ENCODE measurements at regions of chr5 and their contacts with region 1.

Region 1: GRCh38 chr5:153147891-153148623 is 342.4 kb upstream of the GRIA1 start:
- DNase-seq: peak; percentile 31 to 43
- H3K4me3 ChIP-seq: no peak overlapping the region
- H3K27ac ChIP-seq: no peak overlapping the region
- H3K4me1 ChIP-seq: no peaks in the 10 kb centered on the region
- H3K27me3 ChIP-seq: no peaks in the 10 kb centered on the region
- CTCF ChIP-seq: peak in 5 of 6 experiments; percentile 18 to 72 (median 62)
- POLR2A ChIP-seq: no peak

Region 2: DNA sequence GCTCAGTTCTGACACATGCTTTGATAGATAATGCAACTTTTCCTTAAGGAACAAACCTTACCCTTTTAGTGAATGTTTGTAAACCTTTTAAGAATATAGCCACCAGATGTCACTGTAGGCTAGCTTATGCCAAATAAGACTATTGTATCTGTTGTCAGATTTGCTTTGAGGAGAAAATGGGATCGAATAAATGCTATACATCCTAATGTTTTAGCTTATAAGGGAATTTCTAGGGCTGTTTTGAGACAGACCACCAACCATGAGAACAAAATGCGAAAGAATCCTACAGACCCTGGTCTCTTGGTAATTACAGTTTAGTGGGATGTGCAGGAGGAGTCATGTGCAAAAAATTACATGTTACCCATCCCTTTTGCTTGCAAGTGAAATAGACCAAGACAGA is 615.3 kb before region 1 on chr5:
- intact Hi-C with region 1: loop called (anchors 10 kb)
- DNase-seq: no peak
- H3K4me3 ChIP-seq: no peak overlapping the region
- H3K27ac ChIP-seq: no peak overlapping the region
- H3K4me1 ChIP-seq: no peaks in the 10 kb centered on the region
- H3K27me3 ChIP-seq: no peaks in the 10 kb centered on the region
- CTCF ChIP-seq: peak in 5 of 6 experiments; percentile 35 to 77 (median 52)
- POLR2A ChIP-seq: no peak

Region 3: GRCh38 chr5:152560512-152561137 is 587.4 kb before region 1 on chr5:
- intact Hi-C with region 1: loop called (anchors 5 kb)
- DNase-seq: peak; percentile 75 to 82
- H3K4me3 ChIP-seq: no peak overlapping the region
- H3K27ac ChIP-seq: no peak overlapping the region
- H3K4me1 ChIP-seq: no peaks in the 10 kb centered on the region
- H3K27me3 ChIP-seq: no peaks in the 10 kb centered on the region
- CTCF ChIP-seq: peak; percentile 55 to 85 (median 75)
- POLR2A ChIP-seq: no peak

Measured in thyroid gland (tissue), 4 donors.